Activated CD4-positive, alpha-beta memory T cell treated with anti-CD3 and anti-CD28 coated beads for 36 hours (primary cell): ENCODE measurements at regions of chr5 and their contacts with region 1.

Region 1: DNA sequence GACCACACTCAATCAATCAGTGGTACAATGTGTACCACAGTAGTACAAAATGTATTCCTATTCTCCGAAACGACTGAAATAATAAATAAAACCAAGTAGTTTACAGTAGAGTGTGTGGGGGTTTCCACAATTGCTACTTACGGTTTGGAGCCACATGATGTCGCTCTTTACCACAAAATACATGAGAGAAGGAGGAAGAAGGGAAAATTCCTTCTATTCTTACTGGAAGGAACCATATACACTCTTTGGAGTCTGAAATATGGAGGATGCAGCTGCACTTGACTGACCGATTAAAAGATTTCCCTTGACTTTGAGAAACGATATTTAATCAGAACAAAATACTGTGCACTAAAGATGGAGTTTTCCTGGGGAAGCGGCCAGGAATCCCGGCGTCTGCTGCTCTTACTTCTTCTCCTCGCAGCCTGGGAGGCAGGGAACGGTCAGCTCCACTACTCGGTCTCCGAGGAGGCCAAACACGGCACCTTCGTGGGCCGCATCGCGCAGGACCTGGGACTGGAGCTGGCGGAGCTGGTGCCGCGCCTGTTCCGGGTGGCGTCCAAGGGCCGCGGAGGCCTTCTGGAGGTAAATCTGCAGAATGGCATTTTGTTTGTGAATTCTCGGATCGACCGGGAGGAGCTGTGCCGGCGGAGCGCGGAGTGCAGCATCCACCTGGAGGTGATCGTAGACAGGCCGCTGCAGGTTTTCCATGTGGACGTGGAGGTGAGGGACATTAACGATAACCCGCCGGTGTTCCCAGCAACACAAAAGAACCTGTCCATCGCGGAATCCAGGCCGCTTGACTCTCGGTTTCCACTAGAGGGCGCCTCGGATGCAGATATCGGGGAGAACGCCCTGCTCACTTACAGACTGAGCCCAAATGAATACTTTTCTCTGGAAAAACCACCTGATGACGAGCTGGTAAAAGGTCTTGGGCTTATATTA is at the start of gene PCDHA4:
- DNase-seq: peak; percentile 32
- H3K4me3 Mint-ChIP-seq: no peak within 1 kb of the TSS
- H3K27ac Mint-ChIP-seq: no peak within 1 kb of the TSS
- H3K4me1 Mint-ChIP-seq: no peaks in the 10 kb centered on the region
- H3K27me3 Mint-ChIP-seq: peaks cover 12% of the 10 kb centered on the region
- total RNA-seq, gene PCDHA4: not detected

Region 2: DNA sequence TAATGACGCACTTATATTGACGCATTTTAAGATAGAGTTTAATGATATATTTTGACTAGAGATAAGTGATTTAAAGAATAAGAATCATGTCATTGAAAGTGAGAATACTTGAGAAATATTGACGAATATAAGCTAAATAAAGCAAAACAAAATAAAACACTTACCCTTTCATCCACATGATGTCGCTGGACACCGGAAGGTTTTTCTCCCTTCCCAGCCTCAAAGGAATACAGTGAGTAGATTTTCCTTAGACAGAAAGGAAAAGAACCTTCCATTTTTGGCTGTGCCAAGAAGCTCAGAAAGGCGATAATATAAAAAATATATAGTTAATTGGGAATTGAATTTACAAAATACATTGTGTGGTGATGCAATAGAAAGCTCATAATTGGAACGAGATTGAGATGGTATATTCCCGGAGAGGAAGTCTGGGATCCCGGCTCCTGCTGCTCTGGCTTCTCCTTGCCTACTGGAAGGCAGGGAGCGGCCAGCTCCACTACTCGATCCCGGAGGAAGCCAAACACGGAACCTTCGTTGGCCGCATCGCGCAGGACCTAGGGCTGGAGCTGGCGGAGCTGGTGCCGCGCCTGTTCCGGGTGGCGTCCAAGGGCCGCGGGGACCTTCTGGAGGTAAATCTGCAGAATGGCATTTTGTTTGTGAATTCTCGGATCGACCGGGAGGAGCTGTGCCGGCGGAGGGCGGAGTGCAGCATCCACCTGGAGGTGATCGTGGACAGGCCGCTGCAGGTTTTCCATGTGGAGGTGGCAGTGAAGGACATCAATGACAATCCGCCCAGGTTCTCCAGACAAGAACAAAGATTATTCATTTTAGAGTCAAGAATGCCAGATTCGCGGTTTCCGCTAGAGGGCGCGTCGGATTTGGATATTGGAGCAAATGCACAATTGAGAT is 14.5 kb after region 1 on chr5 and contains the start of gene PCDHA5:
- CTCF ChIA-PET with region 1: interaction called, 11 read pairs
- POLR2A ChIA-PET with region 1: no interaction called
- intact Hi-C with region 1: no loop called
- DNase-seq: peak; percentile 36
- H3K4me3 Mint-ChIP-seq: no peak within 1 kb of the TSS
- H3K27ac Mint-ChIP-seq: no peak within 1 kb of the TSS
- H3K4me1 Mint-ChIP-seq: no peaks in the 10 kb centered on the region
- H3K27me3 Mint-ChIP-seq: peaks cover 3% of the 10 kb centered on the region
- total RNA-seq, gene PCDHA5: not detected